Esophagus muscularis mucosa (tissue), 4 donors: ENCODE measurements at regions of chr1 and their contacts with region 1.

Region 1: DNA sequence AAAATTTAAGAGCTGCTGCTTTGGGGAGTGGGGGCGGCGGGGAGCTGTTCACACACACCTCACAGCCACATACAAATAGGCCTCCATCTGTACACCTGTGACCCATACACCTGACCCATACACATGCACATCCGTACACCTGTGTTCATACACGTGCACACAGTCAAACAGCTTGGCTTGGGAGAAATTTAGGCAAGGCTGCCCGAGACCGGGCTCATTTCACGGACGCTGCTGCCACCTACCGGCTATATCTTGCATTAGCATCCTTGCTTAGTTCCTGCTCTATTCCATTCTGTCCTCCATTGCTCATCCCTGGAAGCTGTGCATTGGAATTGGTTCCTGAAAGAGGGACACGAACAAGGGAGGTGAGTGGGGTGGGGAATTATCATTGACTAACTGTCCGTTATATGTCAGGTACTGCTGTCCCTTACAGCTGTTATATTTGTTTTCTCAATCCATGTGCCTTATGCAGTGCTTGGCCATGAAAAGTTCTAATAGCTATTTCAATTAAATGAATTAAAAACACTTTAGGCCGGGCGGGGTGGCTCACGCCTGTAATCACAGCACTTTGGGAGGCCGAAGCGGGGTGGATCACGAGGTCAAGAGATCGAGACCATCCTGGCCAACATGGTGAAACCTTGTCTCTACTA is 37.1 kb upstream of the EPB41 start:
- DNase-seq: peak; percentile 94
- H3K4me3 ChIP-seq: no peak overlapping the region
- H3K27ac ChIP-seq: no peak overlapping the region
- H3K4me1 ChIP-seq: peaks cover 0 to 12% (median 4%) of the 10 kb centered on the region in 4 donors
- H3K27me3 ChIP-seq: peaks cover 0 to 8% (median 0%) of the 10 kb centered on the region in 4 donors
- CTCF ChIP-seq: peak; percentile 87 to 96 (median 91)
- EP300 ChIP-seq: no peak
- POLR2A ChIP-seq: no peak

Region 2: GRCh38 chr1:28779751-28780408 is 97.4 kb before region 1 on chr1:
- intact Hi-C with region 1: loop called (anchors 1 kb)
- DNase-seq: no peak
- H3K4me3 ChIP-seq: no peak overlapping the region
- H3K27ac ChIP-seq: no peak overlapping the region
- H3K4me1 ChIP-seq: peaks cover 7 to 9% (median 8%) of the 10 kb centered on the region in 4 donors
- H3K27me3 ChIP-seq: no peaks in the 10 kb centered on the region
- CTCF ChIP-seq: no peak
- EP300 ChIP-seq: no peak
- POLR2A ChIP-seq: no peak

Region 3: GRCh38 chr1:28936094-28936493 is 58.8 kb after region 1 on chr1:
- intact Hi-C with region 1: no loop called
- DNase-seq: no peak
- H3K4me3 ChIP-seq: no peak overlapping the region
- H3K27ac ChIP-seq: no peak overlapping the region
- H3K4me1 ChIP-seq: no peaks in the 10 kb centered on the region
- H3K27me3 ChIP-seq: no peaks in the 10 kb centered on the region
- CTCF ChIP-seq: no peak
- EP300 ChIP-seq: no peak
- POLR2A ChIP-seq: no peak

Region 4: GRCh38 chr1:29105839-29106238 is 228.6 kb after region 1 on chr1:
- intact Hi-C with region 1: no loop called
- DNase-seq: peak; percentile 17
- H3K4me3 ChIP-seq: no peak overlapping the region
- H3K27ac ChIP-seq: no peak overlapping the region
- H3K4me1 ChIP-seq: no peaks in the 10 kb centered on the region
- H3K27me3 ChIP-seq: no peaks in the 10 kb centered on the region
- CTCF ChIP-seq: no peak
- EP300 ChIP-seq: no peak
- POLR2A ChIP-seq: no peak